GM23248 (cell line): ENCODE measurements at regions of chr2 and their contacts with region 1.

Region 1: GRCh38 chr2:20438334-20439192 is 8.3 kb upstream of the RHOB start:
- DNase-seq: peak; percentile 90
- H3K4me3 ChIP-seq: no peak overlapping the region
- H3K27ac ChIP-seq: no peak overlapping the region
- H3K4me1 ChIP-seq: peaks cover 9% of the 10 kb centered on the region
- H3K27me3 ChIP-seq: no peaks in the 10 kb centered on the region

Region 2: GRCh38 chr2:19711470-19712372 is 726.8 kb before region 1 on chr2:
- in situ Hi-C with region 1: no loop called
- DNase-seq: peak; percentile 99
- H3K4me3 ChIP-seq: no peak overlapping the region
- H3K27ac ChIP-seq: peak overlapping the region; percentile 93
- H3K4me1 ChIP-seq: peaks cover 20% of the 10 kb centered on the region
- H3K27me3 ChIP-seq: no peaks in the 10 kb centered on the region

Region 3: GRCh38 chr2:20642055-20642971 is 203.8 kb after region 1 on chr2:
- in situ Hi-C with region 1: loop called (anchors 10 kb)
- DNase-seq: peak; percentile 85
- H3K4me3 ChIP-seq: no peak overlapping the region
- H3K27ac ChIP-seq: no peak overlapping the region
- H3K4me1 ChIP-seq: no peaks in the 10 kb centered on the region; the same call in 1 of the 2 replicates
- H3K27me3 ChIP-seq: no peaks in the 10 kb centered on the region

Region 4: GRCh38 chr2:20728114-20728758 is 289.7 kb after region 1 on chr2:
- in situ Hi-C with region 1: no loop called
- DNase-seq: no peak
- H3K4me3 ChIP-seq: no peak overlapping the region
- H3K27ac ChIP-seq: no peak overlapping the region
- H3K4me1 ChIP-seq: peaks cover 5% of the 10 kb centered on the region; the same call in 1 of the 2 replicates
- H3K27me3 ChIP-seq: no peaks in the 10 kb centered on the region